ENCODE measurements at regions of chrX and their contacts with region 1.

Region 1: DNA sequence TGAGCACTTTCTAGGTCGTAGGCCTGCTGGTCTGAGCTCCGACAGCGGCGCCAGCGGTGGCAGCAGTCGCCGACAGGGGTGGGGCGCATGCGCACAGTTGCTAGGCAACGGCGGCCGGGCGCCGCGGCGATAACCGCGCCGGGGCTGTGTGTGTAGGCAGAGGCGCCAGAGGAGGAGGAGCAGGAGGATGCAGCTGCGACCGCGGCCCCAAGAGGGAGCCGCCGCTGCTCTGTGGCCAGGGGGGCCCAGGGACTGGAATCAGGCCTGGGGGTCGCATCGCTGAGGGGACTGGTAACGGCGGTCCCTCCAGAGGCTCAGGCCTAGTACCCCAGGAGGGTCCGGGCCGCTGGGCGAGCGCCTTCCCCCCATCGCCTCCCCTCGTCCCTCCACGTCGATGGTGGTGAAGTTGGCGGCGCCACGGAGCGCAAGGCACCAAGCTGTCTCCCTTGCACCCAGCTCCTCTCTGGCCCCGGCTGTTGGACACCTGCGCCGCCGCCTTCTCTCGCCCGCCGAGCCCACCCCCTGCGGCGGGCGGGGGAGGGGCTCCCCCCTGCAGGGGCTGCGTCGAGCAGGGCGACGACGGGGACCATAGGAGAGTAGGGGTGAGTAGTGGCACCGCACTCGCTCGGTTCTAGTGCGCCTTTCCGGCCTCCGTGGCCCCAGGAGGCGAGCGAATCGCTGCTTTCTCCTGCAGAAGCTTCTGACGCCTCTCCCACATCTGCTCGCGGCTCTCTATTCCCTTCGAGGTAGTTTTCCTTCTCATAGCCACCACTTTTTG is 58.6 kb upstream of the ZC4H2 start:
- DNase-seq: peak; percentile 83
- H3K4me3 Mint-ChIP-seq: peak within 1 kb of the TSS; percentile 90
- H3K27ac Mint-ChIP-seq: peak within 1 kb of the TSS; percentile 88
- H3K4me1 Mint-ChIP-seq: peaks cover 27% of the 10 kb centered on the region
- H3K27me3 Mint-ChIP-seq: no peaks in the 10 kb centered on the region

Region 2: GRCh38 chrX:64205735-64206491 is 828.9 kb before region 1 on chrX:
- CTCF ChIA-PET with region 1: no interaction called
- intact Hi-C with region 1: loop called (anchors 2 kb)
- DNase-seq: peak; percentile 90
- H3K4me3 Mint-ChIP-seq: peak overlapping the region; percentile 79
- H3K27ac Mint-ChIP-seq: peak overlapping the region; percentile 91
- H3K4me1 Mint-ChIP-seq: peaks cover 10% of the 10 kb centered on the region
- H3K27me3 Mint-ChIP-seq: no peaks in the 10 kb centered on the region

Region 3: DNA sequence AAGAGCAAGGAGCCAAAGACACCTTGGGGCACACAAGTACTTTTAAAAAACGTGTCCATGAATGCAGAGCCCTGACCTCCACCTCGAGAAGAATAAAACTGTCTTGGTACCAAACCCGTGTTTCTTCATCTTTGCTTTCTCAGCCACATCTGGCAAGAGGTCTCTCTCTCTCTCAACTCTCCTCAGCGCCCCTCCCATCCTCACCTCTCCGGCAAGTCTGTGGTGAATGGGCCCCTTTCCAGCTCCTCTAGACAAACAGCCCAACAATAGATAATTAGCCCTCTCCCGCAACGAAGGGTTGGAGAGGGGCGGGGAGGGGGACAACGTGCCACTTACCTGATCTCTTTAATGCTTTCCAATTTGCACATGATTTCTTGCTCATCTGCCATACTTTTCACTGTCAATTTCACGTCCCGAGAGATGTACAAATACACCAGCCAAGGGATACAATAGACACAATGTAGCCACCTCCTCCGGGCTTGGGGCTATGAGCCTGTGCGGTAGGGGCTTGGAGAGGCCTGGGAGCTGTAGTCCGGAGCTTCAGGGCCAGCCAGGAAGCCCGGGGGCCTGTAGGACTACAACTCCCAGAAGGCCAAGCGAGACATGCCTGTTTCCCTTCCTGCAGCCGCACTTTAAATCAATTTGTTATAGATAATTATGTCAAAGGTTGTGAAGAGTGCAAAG is 58.7 kb before region 1 on chrX and contains the start of gene ZC4H2:
- CTCF ChIA-PET with region 1: interaction called, 3 read pairs
- intact Hi-C with region 1: loop called (anchors 1 kb)
- DNase-seq: peak; percentile 80
- H3K4me3 Mint-ChIP-seq: peak within 1 kb of the TSS; percentile 96
- H3K27ac Mint-ChIP-seq: peak within 1 kb of the TSS; percentile 80
- H3K4me1 Mint-ChIP-seq: peaks cover 18% of the 10 kb centered on the region
- H3K27me3 Mint-ChIP-seq: no peaks in the 10 kb centered on the region
- total RNA-seq, gene ZC4H2: 15.6 to 16.6 TPM

Region 4: GRCh38 chrX:65406532-65406931 is 371.7 kb after region 1 on chrX:
- CTCF ChIA-PET with region 1: no interaction called
- intact Hi-C with region 1: loop called (anchors 1 kb)
- DNase-seq: peak; percentile 36
- H3K4me3 Mint-ChIP-seq: peak overlapping the region; percentile 69
- H3K27ac Mint-ChIP-seq: no peak overlapping the region
- H3K4me1 Mint-ChIP-seq: peaks cover 2% of the 10 kb centered on the region
- H3K27me3 Mint-ChIP-seq: peaks cover 13% of the 10 kb centered on the region

Region 5: DNA sequence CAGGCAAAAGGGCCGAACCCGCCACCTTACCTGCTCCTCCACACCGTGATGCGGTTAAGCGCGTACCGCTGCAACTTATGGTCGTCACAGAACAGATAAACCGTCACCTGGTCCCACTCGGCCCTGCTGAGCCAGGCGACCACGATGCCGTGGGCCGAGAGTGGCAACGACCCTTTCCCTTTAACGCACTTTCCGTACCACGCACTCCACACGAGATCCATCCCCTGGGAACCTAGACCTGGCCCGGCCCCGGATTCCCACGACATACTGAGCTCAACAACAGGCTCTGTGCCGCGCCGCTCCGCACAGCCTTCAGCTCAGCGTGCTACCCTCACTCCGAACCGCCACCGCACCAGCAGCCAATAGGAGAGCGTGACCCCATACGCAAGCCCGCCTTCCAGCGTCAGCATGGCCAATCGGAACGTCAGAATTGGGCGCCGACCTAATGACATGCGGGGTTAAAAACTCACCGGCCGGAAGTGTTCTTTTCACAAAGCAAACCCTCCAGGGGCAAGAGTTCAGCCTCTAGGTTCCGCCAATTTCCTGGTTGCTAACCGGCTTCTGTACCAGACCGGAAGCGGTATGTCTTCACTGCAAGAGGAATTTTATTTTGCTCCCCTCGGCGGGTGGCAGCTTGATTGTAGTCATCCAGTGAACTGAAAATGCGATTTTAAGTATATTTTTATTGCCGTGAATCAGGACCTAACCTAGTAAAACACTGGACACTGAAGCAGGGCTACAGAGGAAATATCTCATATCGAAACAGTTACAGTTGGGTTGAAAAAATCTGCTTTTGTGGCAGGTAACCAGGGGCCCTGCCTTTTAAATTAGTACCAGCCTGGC is 499.8 kb after region 1 on chrX and contains the start of gene LAS1L:
- CTCF ChIA-PET with region 1: no interaction called
- intact Hi-C with region 1: loop called (anchors 1 kb)
- DNase-seq: peak; percentile 93
- H3K4me3 Mint-ChIP-seq: peak within 1 kb of the TSS; percentile 96
- H3K27ac Mint-ChIP-seq: peak within 1 kb of the TSS; percentile 89
- H3K4me1 Mint-ChIP-seq: peaks cover 16% of the 10 kb centered on the region
- H3K27me3 Mint-ChIP-seq: no peaks in the 10 kb centered on the region
- total RNA-seq, gene LAS1L: 60.4 to 61.1 TPM